Lower leg skin (tissue), 4 donors: ENCODE measurements at regions of chr14 and their contacts with region 1.

Region 1: DNA sequence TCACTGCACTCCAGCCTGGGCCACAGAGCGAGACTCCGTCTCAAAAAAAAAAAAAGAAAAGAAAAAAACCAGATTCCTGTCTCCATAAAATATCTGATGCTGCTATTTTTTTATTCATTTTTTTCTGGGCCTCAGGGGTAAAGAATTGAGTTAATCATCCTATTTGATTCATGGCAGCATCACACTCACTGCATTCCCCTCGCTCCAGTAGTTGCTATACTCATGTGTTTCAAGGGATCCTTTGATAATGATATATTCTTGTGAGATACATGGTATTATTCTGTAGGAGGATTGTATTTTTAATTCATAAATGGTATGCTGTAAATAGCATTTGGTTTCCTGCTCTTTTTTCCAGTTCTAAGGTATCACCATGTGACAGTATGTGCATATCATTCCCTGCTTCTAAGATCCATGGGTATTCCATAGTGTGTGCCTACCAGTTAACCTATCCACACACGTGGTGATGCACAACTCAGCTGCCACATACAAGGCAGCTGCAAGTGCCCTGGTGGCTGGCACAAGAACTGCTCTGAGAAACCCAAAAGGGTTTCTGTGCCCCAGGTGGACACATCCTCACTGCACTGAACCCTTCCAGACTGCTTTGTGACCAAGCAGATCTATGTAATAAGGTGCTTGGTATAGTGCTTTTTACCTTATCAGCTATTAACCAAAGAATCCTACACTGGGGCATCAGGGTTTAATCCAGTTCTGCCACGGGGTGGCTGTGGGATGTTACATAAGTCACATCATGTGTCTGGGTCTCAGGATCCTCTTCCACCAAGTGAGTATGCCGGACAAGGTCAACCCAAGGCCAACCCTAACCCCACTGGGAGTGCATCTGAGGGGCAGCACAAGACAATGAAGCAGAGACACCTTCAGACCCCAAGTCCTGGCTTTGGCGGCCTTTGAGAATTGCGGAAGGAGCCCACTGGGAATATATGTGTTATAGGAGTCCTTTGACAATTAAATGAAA is 74.6 kb downstream of the ZFP36L1 start:
- DNase-seq: peak in 1 of 2 donors; percentile 82
- H3K4me3 ChIP-seq: no peak overlapping the region
- CTCF ChIP-seq: no peak
- POLR2A ChIP-seq: no peak

Region 2: DNA sequence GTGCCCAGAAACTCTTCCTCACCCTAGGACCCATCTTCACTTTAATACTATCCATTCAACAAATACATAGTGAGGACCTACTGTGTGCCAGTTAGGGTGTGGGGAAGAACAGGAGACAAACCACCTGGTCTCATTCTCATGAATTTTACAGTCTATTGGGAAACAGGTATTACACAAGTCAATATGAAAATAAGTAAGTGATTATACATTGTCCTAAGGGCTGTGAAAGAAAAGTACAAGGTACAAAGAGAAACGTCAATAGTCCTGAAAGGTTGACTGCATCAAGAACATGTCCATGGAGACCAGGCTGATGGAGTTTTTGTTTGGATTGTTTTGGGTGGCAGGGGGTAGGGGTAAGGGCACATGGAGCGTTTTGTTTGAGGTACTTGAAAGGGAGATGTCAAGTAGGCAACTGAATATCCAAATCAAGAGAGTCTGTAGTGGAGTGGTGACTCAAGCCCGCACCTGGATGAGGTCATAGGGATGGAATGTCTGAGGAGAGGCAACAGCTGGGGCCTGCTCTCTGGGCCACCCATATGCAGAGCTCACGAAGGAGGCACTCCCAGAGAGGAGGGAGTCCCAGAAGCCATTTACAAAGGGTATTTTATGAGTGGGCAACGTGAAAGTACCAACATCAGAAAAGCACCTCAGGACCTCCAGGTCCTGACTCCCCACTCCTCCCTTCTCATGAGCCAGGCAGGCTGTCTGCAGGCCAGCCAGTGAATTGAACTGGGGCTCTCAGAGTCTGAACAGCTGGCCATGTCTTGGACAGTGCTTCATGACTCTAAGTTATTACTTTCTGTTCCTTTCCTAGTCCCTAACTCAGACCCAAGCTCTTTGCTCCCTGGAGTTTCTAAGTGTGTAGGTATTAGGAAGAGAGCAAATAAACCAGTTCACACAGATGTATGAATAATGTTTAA is 197.4 kb before region 1 on chr14:
- intact Hi-C with region 1: loop called (anchors 10 kb)
- DNase-seq: peak in 1 of 2 donors; percentile 85
- H3K4me3 ChIP-seq: no peak overlapping the region
- CTCF ChIP-seq: no peak
- POLR2A ChIP-seq: no peak

Region 3: GRCh38 chr14:68621400-68622365 is 96.6 kb before region 1 on chr14:
- intact Hi-C with region 1: no loop called
- DNase-seq: peak; percentile 17 to 74
- H3K4me3 ChIP-seq: no peak overlapping the region
- CTCF ChIP-seq: no peak
- POLR2A ChIP-seq: no peak

Region 4: DNA sequence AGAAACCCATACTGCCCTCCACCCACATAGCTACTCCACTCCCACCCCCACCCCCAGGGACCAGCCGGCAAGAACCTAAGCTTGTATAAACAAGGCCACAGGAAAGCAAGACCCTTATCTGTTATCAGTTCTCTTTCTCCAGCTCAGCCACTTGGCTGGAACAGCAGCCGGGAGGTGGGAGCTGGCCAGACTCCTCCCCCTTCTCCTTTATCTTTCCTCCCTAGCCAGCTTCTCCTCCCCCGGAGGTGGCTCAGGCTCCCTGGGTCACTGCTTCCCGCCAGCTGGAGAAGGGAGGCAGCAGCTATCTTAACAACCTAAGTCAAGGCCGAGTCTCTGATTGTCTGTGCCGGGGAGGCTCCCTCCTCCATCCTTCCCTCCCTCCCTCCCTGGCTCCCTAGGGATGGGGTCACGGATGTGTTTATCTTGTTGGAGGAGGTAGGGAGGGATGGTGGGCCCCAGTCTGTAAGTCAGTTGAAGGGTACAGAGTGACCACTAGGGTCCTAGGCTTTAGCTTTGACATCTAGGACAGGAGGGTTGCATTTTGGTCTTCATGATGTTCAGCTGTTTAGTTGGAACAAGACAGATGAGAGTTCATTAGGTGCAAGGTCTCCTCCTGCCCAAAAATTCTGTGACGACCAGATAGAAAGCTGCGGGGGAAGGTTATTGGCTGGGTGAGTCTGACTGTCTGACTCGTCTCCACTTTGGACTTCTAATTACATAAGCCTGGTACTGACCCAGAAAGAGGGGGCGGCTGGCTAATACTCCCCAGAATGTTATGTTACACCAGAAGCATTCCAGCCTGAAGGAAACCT is 44.9 kb after region 1 on chr14:
- intact Hi-C with region 1: loop called (anchors 1 kb)
- DNase-seq: no peak
- H3K4me3 ChIP-seq: no peak overlapping the region
- CTCF ChIP-seq: no peak
- POLR2A ChIP-seq: no peak